Calu3 (cell line): ENCODE measurements at regions of chr7 and their contacts with region 1.

Region 1: DNA sequence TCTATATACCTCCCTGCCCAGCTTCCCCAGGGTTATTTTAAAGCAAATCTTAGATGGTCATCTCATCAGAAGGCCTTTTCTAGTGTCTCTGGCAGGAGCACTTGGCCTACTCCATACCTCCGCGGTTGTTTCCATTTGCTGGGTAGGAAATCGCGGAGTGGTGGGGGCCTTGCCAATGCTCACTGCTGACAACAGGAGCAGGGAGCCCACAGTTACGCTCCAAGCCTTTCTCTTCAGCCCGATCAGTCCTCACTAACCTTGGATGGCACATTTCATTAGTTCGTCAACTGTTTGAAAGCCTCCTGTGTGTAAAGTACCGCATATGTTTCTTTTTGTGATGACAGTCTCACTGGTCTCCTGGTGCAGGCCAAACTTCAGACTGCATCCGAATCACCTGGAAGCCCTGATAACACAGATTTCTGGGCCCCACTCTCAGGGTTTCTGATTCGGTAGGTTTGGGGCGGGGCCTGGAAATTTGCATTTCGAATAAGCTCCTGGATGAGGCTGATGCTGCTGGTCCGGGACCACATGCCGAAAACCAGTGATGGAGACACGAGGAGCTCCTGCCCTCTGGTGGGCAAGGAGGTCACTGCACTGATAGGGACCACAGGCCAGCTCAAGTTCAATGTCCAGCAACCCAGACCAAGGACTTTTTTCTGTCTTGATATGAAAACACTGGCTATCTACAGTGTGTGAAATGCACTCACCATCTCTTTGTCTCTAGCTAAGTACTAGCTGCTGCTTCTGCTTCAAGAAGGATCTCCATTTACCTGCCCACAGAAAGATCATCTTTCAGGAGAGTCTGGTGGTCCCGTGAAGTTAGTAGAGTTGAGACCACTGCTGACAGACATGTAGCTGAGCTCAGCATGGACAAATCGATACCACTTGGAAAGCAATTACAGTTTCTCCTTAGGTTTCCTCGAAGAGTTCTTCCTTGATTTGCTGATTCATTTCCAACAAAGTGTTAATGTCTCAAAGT is 14.0 kb downstream of the LRGUK start:
- DNase-seq: peak; percentile 76
- H3K4me3 Mint-ChIP-seq: no peak overlapping the region
- H3K27ac Mint-ChIP-seq: no peak overlapping the region
- H3K4me1 Mint-ChIP-seq: no peaks in the 10 kb centered on the region
- H3K27me3 Mint-ChIP-seq: no peaks in the 10 kb centered on the region
- CTCF ChIP-seq: peak; percentile 60

Region 2: DNA sequence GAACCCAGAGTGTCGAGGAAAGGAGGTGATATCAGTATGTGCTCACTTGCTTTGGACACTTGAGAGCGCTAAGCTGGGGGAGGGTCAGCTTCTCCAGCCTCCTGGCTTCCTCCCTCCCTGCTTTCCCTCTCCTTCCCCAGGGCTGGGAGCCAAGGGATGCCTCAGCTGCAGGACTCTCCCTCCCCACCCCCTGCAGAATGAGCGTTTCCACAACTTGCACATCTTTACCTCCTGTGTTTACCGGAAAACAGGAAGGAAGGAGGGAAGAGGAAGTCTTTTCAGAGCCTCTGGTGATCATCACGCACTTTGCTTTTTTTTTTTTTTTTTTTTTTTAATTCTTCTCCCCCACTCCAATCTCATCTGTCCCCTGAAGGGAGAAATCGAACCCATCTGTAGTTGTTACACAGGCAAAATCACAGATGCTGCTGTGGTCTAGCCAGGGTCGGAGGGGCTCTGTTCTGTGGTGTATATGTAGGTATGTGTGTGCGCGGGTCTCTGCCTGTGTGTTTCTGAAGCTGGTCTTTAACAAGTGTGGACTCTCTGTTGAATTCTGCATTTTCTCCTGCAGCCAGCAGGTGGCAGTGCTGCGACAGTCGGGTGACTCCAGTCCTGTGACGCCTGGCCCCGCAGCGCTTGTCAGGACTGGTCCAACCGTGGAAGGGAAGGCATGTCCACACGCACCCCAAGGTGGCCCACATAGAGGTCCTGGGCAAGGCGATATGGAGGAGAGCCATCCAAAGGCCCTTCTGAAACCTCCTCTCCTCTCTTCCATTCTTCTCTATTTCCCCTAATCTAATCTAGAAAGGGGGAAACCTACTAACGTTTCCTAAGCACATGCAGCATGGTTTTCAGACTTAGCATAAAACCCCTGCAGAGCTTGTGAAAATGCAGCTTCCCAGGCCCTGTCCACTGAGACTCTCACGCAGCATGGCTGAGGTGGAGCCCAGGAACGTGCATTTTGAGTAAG is 1822.5 kb before region 1 on chr7:
- CTCF ChIA-PET with region 1: no interaction called
- intact Hi-C with region 1: loop called (anchors 10 kb)
- DNase-seq: peak; percentile 82
- H3K4me3 Mint-ChIP-seq: no peak overlapping the region
- H3K27ac Mint-ChIP-seq: no peak overlapping the region
- H3K4me1 Mint-ChIP-seq: peaks cover 12% of the 10 kb centered on the region
- H3K27me3 Mint-ChIP-seq: peaks cover 92% of the 10 kb centered on the region
- CTCF ChIP-seq: peak; percentile 81

Region 3: GRCh38 chr7:134126966-134127848 is 14.0 kb before region 1 on chr7 and contains the start of gene LRGUK:
- CTCF ChIA-PET with region 1: interaction called, 11 read pairs
- intact Hi-C with region 1: no loop called
- DNase-seq: peak; percentile 83
- H3K4me3 Mint-ChIP-seq: peak within 1 kb of the TSS; percentile 75
- H3K27ac Mint-ChIP-seq: peak within 1 kb of the TSS; percentile 48
- H3K4me1 Mint-ChIP-seq: peaks cover 21% of the 10 kb centered on the region
- H3K27me3 Mint-ChIP-seq: peaks cover 75% of the 10 kb centered on the region
- CTCF ChIP-seq: no peak
- total RNA-seq, gene LRGUK: 0.52 and 0.56 TPM in 2 replicates

Region 4: GRCh38 chr7:134154581-134155130 is 13.5 kb after region 1 on chr7:
- CTCF ChIA-PET with region 1: interaction called, 12 read pairs
- intact Hi-C with region 1: no loop called
- DNase-seq: no peak
- H3K4me3 Mint-ChIP-seq: no peak overlapping the region
- H3K27ac Mint-ChIP-seq: no peak overlapping the region
- H3K4me1 Mint-ChIP-seq: no peaks in the 10 kb centered on the region
- H3K27me3 Mint-ChIP-seq: no peaks in the 10 kb centered on the region
- CTCF ChIP-seq: no peak

Region 5: DNA sequence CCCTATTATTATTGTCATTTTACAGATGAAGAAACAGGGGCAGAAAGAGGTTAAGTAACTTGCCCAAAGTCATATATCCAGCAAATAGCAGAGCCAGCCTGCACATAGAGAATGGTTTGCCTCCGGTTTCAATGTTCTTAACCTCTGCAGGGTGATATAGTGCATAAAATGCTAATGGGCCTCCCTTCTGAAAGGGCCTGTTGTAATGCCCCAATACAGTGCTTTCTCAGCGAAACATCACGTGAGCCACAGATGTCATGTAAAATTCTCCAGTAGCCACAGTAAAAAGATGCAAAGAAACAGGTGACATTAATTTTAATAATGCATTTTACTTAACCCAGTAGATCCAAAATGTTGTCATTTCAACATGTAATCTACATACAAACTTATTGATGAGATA is 24.1 kb after region 1 on chr7:
- CTCF ChIA-PET with region 1: no interaction called
- intact Hi-C with region 1: no loop called
- DNase-seq: no peak
- H3K4me3 Mint-ChIP-seq: no peak overlapping the region
- H3K27ac Mint-ChIP-seq: no peak overlapping the region
- H3K4me1 Mint-ChIP-seq: no peaks in the 10 kb centered on the region
- H3K27me3 Mint-ChIP-seq: no peaks in the 10 kb centered on the region
- CTCF ChIP-seq: no peak